GM10248 (cell line): ENCODE measurements at regions of chr6 and their contacts with region 1.

Region 1: DNA sequence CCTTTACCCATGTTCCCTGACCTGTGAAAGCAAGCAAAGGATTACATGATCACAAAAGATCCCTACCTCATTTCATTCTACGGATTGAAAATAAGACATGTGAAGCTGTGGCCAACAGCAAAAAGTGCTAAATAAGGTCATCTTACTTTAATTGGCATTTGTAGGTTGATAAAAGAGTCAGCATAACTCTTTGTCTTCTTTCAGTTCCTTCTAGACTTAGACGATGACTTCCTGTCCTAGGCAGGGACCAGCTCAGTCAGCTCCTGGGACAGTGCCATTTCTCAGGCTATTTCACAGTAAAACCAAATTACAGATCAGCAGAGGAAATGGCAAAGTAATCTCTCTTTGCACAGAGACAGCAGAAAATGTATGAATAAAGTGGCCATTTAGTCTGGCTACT is 480.7 kb downstream of the RFPL4B start:
- DNase-seq: peak; percentile 8
- CTCF ChIP-seq: no peak

Region 2: GRCh38 chr6:112839525-112839961 is 11.8 kb after region 1 on chr6:
- CTCF ChIA-PET with region 1: interaction called, 10 read pairs
- POLR2A ChIA-PET with region 1: no interaction called
- DNase-seq: no peak
- CTCF ChIP-seq: no peak